ENCODE measurements at regions of chr1 and their contacts with region 1.

Region 1: GRCh38 chr1:200558866-200559459 is 61.6 kb downstream of the KIF14 start:
- DNase-seq: peak; percentile 47
- H3K4me3 ChIP-seq: no peak overlapping the region
- H3K27ac ChIP-seq: no peak overlapping the region
- H3K4me1 ChIP-seq: no peaks in the 10 kb centered on the region
- H3K27me3 ChIP-seq: no peaks in the 10 kb centered on the region
- CTCF ChIP-seq: peak; percentile 86
- EP300 ChIP-seq: no peak
- RAD21 ChIP-seq: peak; percentile 77

Region 2: DNA sequence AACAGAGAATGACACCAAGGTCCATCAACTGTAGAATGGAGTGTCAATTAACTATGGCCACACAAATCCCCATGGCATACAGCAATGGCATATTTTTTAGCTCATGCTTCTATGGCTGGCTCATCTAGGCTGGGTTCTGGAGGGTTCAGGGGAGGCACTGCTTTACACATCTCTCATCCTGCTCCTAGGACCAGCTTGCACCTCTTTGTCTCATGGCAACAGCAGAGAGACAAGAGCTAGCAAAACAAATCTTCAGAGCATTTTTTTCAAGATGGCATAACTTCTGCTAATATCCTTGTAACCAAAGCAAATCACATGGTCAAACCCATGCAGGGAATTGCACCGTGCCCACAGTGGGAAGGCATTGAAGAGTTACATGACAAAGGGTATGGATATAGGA is 20.8 kb before region 1 on chr1:
- CTCF ChIA-PET with region 1: interaction called, 13 read pairs
- POLR2A ChIA-PET with region 1: no interaction called
- DNase-seq: no peak
- H3K4me3 ChIP-seq: no peak overlapping the region
- H3K27ac ChIP-seq: no peak overlapping the region
- H3K4me1 ChIP-seq: no peaks in the 10 kb centered on the region
- H3K27me3 ChIP-seq: no peaks in the 10 kb centered on the region
- CTCF ChIP-seq: no peak
- EP300 ChIP-seq: no peak
- RAD21 ChIP-seq: no peak